ENCODE measurements at regions of chr7 and their contacts with region 1.

Region 1: GRCh38 chr7:139109188-139109982 is at the start of gene ZC3HAV1:
- DNase-seq: peak; percentile 83 to 91
- ATAC-seq: peak; percentile 93 to 96 (median 95)
- H3K4me3 ChIP-seq: peak within 1 kb of the TSS; percentile 84 to 99 (median 92)
- H3K27ac ChIP-seq: peak within 1 kb of the TSS; percentile 92 to 100 (median 97)
- H3K4me1 ChIP-seq: peaks cover 0 to 54% (median 26%) of the 10 kb centered on the region in 9 donors
- H3K27me3 ChIP-seq: no peaks in the 10 kb centered on the region
- CTCF ChIP-seq: peak in 1 of 9 donors; percentile 23
- total RNA-seq, gene ZC3HAV1: 4.4 to 28.3 (median 6.7) TPM

Region 2: DNA sequence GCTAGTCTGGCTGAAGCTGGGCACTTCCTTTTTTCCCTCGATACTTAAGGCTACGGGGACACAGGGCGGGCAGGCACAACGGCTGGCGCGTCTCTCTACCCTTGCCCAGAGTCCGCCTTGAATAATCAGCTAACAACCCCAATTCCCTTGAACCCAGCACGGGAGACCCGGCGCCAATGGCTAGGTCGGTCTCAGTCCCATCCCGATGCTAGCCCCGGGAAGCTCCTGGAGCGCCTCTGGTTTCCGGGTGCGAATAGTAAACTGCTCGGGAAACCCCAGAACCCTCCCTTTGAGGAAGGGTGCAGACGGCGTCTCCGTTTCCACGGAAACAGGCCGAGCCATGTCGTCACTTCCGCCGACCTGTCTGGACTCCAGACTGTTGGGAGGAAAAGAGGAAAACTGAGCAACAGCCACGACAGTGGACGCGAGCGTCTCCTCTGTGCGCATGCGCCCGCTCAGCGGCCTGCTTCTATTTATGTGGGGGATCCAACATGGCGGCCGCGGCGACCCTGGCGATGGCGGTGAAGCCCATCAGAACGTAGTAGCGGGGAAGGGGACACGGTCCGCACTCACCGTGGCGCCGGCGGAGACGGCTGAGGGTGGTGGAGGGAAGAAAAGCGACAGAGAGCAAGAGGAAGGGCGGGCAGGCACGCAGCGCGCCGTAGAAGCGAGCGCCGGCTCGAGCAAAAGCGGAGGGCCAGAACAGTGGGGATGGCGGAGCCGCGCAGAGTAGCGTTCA is 121.6 kb after region 1 on chr7 and contains the start of gene UBN2:
- intact Hi-C with region 1: loop called in 1 of 10 experiments (anchors 10 kb)
- DNase-seq: peak; percentile 96 to 97
- ATAC-seq: peak; percentile 97 to 99 (median 98)
- H3K4me3 ChIP-seq: peak within 1 kb of the TSS; percentile 78 to 100 (median 94)
- H3K27ac ChIP-seq: peak within 1 kb of the TSS; percentile 88 to 99 (median 96)
- H3K4me1 ChIP-seq: peaks cover 0 to 38% (median 34%) of the 10 kb centered on the region in 9 donors
- H3K27me3 ChIP-seq: no peaks in the 10 kb centered on the region
- CTCF ChIP-seq: no peak
- total RNA-seq, gene UBN2: 12.6 to 27.0 (median 22.3) TPM

Measured in heart right ventricle (tissue), 16 donors.